Activated naive CD4-positive, alpha-beta T cell treated with anti-CD3 and anti-CD28 coated beads for 36 hours (primary cell): ENCODE measurements at regions of chr2 and their contacts with region 1.

Region 1: GRCh38 chr2:168490015-168490874 is 34.2 kb downstream of the CERS6 start:
- DNase-seq: peak; percentile 82
- H3K4me3 Mint-ChIP-seq: peak overlapping the region; percentile 57
- H3K27ac Mint-ChIP-seq: peak overlapping the region; percentile 90
- H3K4me1 Mint-ChIP-seq: peaks cover 48% of the 10 kb centered on the region
- H3K27me3 Mint-ChIP-seq: no peaks in the 10 kb centered on the region

Region 2: DNA sequence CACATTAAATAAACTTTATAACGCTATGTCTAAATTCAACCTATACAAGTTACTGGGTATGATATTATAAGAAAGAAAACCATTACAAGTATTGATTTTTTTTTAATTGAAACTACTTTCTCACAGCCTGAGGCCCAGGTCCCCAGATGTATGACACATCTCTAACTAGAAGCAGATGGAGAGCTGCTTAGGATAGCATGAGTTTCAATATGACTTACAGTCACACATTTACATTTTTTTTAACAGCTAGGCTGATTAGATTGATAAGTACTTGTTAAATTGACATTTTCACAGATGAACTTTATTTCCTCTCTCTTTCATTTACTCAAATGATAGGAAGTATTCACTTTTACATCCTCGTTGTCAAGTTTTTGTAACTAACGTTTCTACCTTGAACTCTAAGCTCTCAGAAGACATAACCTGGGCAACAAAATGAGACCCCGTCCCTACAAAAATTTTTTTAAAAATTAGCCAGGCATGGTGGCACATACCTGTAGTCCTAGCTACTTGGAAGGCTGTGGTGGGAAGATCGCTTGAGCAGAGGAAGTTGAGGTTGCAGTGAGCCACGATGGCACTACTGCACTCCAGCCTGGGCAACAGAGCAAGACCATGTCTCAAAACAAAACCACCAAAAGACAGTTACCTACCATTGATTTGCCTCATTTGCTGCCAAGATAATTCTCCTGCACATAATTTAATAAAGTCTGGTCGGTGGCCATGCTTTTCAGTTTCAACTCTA is 295.3 kb before region 1 on chr2:
- CTCF ChIA-PET with region 1: no interaction called
- intact Hi-C with region 1: loop called (anchors 1 kb)
- DNase-seq: peak; percentile 60
- H3K4me3 Mint-ChIP-seq: peak overlapping the region; percentile 53
- H3K27ac Mint-ChIP-seq: peak overlapping the region; percentile 91
- H3K4me1 Mint-ChIP-seq: peaks cover 85% of the 10 kb centered on the region
- H3K27me3 Mint-ChIP-seq: no peaks in the 10 kb centered on the region

Region 3: DNA sequence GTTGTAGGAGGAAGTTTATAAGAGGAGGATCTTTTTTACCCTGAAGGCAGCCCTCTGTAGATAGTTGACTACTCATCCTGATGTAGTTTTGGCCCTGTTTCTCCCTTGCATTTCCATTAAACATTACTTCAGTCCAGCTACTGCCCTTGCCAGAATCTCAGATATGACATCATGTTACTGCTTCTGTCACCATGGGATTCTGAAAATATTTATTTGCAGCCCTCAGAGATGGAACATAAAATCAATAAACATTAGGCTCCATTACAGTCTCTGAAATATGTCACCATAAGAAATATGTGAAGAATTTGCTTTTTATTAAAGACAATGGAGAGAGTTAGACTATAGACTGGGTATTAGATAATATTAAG is 174.2 kb before region 1 on chr2:
- CTCF ChIA-PET with region 1: no interaction called
- intact Hi-C with region 1: no loop called
- DNase-seq: no peak
- H3K4me3 Mint-ChIP-seq: no peak overlapping the region
- H3K27ac Mint-ChIP-seq: no peak overlapping the region
- H3K4me1 Mint-ChIP-seq: no peaks in the 10 kb centered on the region
- H3K27me3 Mint-ChIP-seq: no peaks in the 10 kb centered on the region

Region 4: DNA sequence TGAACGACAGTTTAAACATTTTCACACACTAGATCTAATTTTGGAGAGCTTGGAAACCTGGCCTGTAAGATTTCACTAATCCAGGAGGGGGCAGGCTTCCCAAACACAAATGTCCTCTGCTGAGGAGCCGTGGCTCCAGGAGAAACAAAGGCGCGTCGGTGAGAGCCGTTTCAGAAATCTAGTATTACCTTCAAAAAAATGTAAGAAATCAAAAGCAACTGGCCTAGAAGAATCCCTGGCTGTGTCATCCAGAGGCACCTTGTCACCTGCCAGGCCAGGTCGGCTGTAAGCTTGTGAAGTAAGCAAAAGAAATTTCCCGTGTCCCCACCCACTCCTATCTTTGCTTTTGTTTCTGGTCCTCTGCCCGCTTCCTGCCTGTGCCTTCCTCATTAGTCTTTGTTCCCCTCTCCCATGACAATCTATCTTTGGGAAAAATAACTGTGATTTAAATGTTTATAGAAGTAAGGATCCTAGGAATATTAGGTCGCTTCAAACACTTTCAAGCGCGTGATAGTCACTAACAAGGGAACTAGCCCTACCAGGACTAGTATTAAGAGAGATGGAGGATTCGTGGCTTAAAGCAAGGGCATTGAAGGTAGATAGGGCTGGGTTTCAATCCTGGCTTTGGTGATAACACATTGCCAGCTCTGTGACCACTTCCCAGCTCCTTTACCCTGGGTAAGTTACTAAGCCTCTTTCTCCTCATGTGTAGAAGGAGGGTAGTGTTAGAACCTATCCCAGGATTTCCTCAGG is 143.3 kb before region 1 on chr2:
- CTCF ChIA-PET with region 1: no interaction called
- intact Hi-C with region 1: loop called (anchors 2 kb)
- DNase-seq: peak; percentile 83
- H3K4me3 Mint-ChIP-seq: peak overlapping the region; percentile 74
- H3K27ac Mint-ChIP-seq: no peak overlapping the region
- H3K4me1 Mint-ChIP-seq: peaks cover 4% of the 10 kb centered on the region
- H3K27me3 Mint-ChIP-seq: no peaks in the 10 kb centered on the region

Region 5: DNA sequence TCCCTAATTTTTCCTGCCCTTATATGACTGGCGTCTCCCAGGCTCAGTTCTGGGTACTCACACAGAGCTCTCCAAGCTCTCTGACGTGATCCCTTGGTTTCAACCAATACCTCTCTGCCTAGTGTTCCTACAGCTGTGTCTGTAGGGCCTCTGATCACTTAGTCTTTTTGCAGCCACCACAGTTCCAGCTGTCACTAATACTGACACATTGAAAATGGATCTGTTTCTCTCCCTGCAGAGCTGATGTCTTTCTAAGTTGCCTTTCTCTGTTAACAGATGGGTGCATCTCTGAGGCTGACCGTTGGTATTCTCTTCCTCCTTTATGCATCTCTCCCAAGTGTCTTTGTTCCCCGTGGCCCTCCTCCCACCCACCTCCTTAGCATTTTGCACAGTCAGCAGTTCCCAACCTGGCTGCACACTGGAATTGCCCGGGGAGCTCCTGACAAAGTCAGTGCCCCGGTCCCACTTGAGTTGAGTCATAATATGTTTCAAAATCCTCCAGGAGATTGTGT is 28.4 kb after region 1 on chr2:
- CTCF ChIA-PET with region 1: no interaction called
- intact Hi-C with region 1: no loop called
- DNase-seq: no peak
- H3K4me3 Mint-ChIP-seq: no peak overlapping the region
- H3K27ac Mint-ChIP-seq: no peak overlapping the region
- H3K4me1 Mint-ChIP-seq: peaks cover 57% of the 10 kb centered on the region
- H3K27me3 Mint-ChIP-seq: no peaks in the 10 kb centered on the region

Region 6: DNA sequence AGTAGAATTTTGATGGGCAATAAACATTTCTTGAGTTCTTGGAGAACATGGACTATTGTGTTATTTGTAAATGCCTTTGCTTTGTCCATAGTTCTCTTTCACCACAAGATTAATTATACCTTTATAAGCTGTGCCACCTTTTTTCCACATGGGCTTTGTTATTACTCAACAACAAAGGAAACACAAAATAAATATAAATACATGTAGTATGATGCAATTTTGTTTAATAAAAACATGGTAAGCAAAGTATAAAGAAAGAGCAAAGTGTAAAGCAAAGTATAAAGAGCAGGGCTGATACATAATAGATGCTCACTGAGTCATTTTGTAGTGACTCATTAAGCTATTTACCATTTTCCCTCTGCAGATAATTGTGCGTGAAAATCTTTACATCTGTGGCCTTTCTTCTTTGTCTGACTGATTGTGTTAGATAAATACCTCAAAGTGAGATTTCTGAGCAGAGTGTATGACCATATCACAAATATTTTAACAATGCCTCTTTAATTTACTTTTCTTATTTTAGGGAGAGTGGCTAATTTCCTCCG is 46.8 kb after region 1 on chr2:
- CTCF ChIA-PET with region 1: no interaction called
- intact Hi-C with region 1: loop called (anchors 1 kb)
- DNase-seq: no peak
- H3K4me3 Mint-ChIP-seq: no peak overlapping the region
- H3K27ac Mint-ChIP-seq: no peak overlapping the region
- H3K4me1 Mint-ChIP-seq: peaks cover 48% of the 10 kb centered on the region
- H3K27me3 Mint-ChIP-seq: no peaks in the 10 kb centered on the region

Region 7: DNA sequence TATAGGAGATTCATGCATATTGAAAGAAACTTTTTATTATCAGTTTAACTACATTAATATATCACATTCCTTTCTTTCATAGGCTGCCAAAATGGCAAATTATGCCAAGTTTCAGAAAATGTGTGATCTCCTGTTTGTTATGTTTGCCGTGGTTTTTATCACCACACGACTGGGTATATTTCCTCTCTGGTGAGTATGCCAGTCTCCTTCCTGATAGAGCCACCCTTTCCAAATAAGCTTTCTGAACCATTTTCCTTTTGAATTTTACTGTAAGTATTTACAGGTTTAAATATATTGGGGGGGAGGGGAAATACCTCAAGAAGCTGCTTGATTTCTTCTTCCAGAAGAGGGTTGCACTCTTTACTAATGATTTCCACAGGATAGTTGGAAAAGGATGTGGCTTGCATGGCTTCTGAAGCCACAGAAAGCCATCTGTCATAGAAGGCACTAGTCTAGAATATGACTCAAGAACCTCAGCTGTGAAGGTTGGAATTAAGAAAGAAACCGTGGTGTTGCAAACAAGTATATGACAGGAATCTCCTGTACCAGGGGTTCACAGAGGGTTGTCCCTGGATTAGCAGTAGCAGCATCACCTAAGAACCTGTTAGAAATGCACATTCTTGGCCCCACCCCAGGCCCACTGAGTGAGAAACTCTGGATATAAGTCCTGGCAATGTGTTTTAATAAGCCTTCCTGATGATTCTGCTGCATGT is 227.7 kb after region 1 on chr2:
- CTCF ChIA-PET with region 1: no interaction called
- intact Hi-C with region 1: loop called (anchors 1 kb)
- DNase-seq: peak; percentile 10
- H3K4me3 Mint-ChIP-seq: no peak overlapping the region
- H3K27ac Mint-ChIP-seq: no peak overlapping the region
- H3K4me1 Mint-ChIP-seq: peaks cover 13% of the 10 kb centered on the region
- H3K27me3 Mint-ChIP-seq: no peaks in the 10 kb centered on the region

Region 8: GRCh38 chr2:169007941-169008340 is 517.7 kb after region 1 on chr2:
- CTCF ChIA-PET with region 1: no interaction called
- intact Hi-C with region 1: no loop called
- DNase-seq: no peak
- H3K4me3 Mint-ChIP-seq: no peak overlapping the region
- H3K27ac Mint-ChIP-seq: no peak overlapping the region
- H3K4me1 Mint-ChIP-seq: peaks cover 10% of the 10 kb centered on the region
- H3K27me3 Mint-ChIP-seq: no peaks in the 10 kb centered on the region

Region 9: GRCh38 chr2:169069341-169069740 is 579.1 kb after region 1 on chr2 and contains the start of gene DHRS9:
- CTCF ChIA-PET with region 1: no interaction called
- intact Hi-C with region 1: loop called (anchors 5 kb)
- DNase-seq: peak; percentile 63
- H3K4me3 Mint-ChIP-seq: peak within 1 kb of the TSS; percentile 37
- H3K27ac Mint-ChIP-seq: no peak within 1 kb of the TSS
- H3K4me1 Mint-ChIP-seq: peaks cover 39% of the 10 kb centered on the region
- H3K27me3 Mint-ChIP-seq: peaks cover 2% of the 10 kb centered on the region
- total RNA-seq, gene DHRS9: 2.0 to 2.6 TPM